ENCODE measurements at regions of chr1 and their contacts with region 1.

Region 1: DNA sequence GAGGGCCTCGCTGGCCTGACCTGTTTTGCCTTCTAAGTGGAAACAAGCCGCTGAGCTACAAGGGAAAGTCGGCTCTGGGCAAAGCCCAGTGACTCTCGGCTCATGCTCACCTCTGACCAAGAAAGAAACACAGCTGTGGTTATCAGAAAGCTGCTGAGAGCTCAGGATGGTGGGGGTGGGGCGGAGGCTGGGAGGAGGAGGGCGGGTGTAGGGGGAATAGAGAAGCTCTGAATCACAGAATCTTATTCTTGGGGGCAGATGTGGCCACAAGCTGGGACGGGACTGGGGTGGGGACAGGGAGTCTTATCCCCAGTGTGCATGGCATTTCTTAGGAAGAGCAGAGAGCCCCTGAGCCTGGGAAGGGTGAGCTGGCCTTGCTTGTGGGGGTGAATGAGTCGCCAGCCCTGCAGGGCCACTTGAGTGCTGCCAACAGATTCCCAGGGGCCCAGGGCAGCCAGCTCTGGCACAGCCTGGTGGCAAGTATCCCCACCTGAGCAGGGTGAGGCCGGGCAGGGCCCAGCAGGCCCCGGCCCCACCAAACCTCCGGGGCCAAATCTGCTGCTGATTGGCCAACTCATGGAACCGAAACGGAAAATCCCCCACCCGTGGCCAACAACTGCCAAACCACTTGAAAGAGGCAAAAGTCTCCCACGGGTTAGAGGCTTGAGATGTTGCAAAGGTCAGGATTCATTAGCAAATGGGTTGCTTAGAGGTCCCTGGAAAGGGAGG is 120.6 kb downstream of the SPSB1 start:
- DNase-seq: peak; percentile 90
- CTCF ChIP-seq: no peak

Region 2: GRCh38 chr1:9399510-9400424 is 13.5 kb before region 1 on chr1:
- CTCF ChIA-PET with region 1: interaction called, 13 read pairs
- POLR2A ChIA-PET with region 1: no interaction called
- DNase-seq: no peak
- CTCF ChIP-seq: no peak

Region 3: GRCh38 chr1:9426291-9426711 is 13.0 kb after region 1 on chr1:
- CTCF ChIA-PET with region 1: interaction called, 18 read pairs
- POLR2A ChIA-PET with region 1: interaction called, 9 read pairs
- DNase-seq: peak; percentile 86
- CTCF ChIP-seq: no peak